HCT116 (cell line): ENCODE measurements at regions of chr13 and their contacts with region 1.

Region 1: DNA sequence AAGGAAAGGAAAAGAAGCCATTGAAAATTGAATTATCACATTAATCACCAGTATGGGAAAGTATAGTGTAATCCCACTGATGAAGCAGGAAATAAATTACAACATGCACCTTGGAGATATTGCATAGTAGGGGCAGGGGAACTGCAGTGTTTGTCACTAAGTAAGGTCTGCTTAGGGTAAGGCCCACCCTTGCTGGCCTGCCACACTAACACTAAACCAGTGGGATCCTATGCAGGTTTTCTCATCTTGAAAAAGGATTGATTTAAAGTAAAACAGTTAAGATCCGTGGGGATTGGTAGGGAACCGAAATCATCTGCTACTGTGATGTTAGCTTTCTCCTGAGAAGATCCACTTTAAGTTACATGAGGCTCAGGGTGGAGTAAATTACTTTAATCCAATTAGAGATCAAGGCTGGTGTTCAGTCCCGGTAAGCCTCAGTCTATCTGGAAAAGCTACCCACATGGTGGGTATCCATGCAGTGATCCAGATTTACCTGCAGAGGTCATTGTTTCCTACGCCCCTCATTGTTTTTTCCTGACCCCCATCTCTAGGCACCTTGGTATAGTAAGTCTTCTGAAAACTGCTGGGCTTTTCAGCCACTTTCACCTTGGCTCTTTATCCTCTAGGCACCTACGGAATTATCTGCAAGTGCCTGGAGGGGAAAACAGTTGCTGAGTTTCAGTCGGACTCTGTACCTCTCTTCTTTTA is 1014.9 kb upstream of the ATXN8OS start:
- DNase-seq: no peak
- ATAC-seq: no peak
- H3K4me3 ChIP-seq: no peak overlapping the region
- H3K27ac ChIP-seq: no peak overlapping the region
- H3K4me1 ChIP-seq: no peaks in the 10 kb centered on the region
- H3K27me3 ChIP-seq: no peaks in the 10 kb centered on the region
- CTCF ChIP-seq: peak in 1 of 3 experiments; percentile 13; a peak in 1 of 6 replicates
- POLR2A ChIP-seq: no peak
- RAD21 ChIP-seq: no peak

Region 2: DNA sequence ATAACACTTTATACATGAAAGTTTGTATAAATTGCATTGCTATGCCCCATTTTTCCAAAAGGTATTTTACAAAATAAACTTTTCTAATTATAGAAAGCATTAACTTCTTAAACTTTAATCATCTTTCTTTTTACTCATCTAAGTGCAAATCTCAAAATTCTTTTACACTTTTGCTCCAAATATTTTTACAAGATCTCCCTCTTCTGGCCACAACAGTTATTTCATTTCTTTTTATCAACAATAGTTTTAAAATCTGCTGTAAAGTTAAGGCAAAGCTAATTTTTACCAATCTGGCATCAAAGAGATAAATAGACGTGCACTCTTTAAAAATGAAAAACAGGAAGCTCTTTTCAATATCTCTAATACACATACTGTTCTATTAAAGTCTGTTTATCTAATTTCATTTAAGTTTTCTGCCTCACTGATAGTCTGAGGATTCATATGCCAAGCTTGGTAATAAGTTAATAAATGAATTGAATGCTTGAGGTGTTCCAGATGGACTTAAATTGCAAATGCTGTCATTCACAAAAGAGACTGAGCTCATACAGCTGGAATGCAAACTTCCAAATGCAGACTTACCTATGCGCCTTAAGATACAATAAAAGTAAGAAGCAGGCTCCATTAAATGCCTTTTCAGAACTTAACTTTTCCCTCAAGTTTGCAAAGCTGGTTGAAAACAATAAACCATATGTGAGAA is 431.8 kb after region 1 on chr13:
- CTCF ChIA-PET with region 1: no interaction called
- POLR2A ChIA-PET with region 1: no interaction called
- RAD21 ChIA-PET with region 1: no interaction called
- intact Hi-C with region 1: loop called (anchors 10 kb)
- DNase-seq: no peak
- ATAC-seq: no peak
- H3K4me3 ChIP-seq: no peak overlapping the region
- H3K27ac ChIP-seq: no peak overlapping the region
- H3K4me1 ChIP-seq: no peaks in the 10 kb centered on the region
- H3K27me3 ChIP-seq: no peaks in the 10 kb centered on the region
- CTCF ChIP-seq: peak in 2 of 3 experiments; percentile 4 to 39; a peak in 3 of 6 replicates
- POLR2A ChIP-seq: no peak
- RAD21 ChIP-seq: 0 out of 2 replicates have a peak, but pooled peaks have one; percentile 23